HCT116 (cell line): ENCODE measurements at regions of chr14 and their contacts with region 1.

Region 1: GRCh38 chr14:100440187-100440631 is 117.1 kb downstream of the SLC25A47 start:
- DNase-seq: no peak
- ATAC-seq: peak; percentile 75
- H3K4me3 ChIP-seq: peak overlapping the region in 1 of 2 experiments; percentile 42; a peak in 2 of 4 replicates
- H3K27ac ChIP-seq: peak overlapping the region; percentile 77
- H3K4me1 ChIP-seq: peaks cover 43 to 78% of the 10 kb centered on the region in 2 experiments
- H3K27me3 ChIP-seq: no peaks in the 10 kb centered on the region
- CTCF ChIP-seq: peak; percentile 87 to 94 (median 93)
- POLR2A ChIP-seq: no peak
- RAD21 ChIP-seq: peak; percentile 98

Region 2: DNA sequence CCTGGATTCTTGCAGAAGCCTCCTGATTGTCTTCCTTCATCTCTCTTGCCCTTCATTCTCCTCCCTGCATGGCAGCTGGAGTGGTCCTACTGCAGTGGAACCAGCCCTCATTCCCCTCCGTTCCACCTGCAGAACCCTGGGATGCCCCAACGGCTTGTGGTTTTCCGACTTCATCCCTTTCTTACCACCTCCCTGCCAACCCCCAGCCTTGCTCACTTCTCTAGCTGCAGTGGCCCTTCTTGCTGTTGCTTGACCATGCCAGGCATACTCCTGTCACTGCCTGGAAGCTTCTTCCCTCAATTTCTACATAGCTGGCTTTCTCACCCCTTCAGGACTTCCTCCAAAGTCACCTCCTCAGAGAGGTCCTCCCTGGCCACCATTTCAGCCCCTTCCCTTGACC is 23.7 kb after region 1 on chr14:
- CTCF ChIA-PET with region 1: no interaction called
- POLR2A ChIA-PET with region 1: no interaction called
- RAD21 ChIA-PET with region 1: no interaction called
- intact Hi-C with region 1: no loop called
- DNase-seq: no peak
- ATAC-seq: no peak
- H3K4me3 ChIP-seq: no peak overlapping the region
- H3K27ac ChIP-seq: no peak overlapping the region
- H3K4me1 ChIP-seq: no peaks in the 10 kb centered on the region
- H3K27me3 ChIP-seq: peaks cover 27% of the 10 kb centered on the region; the same call in 1 of the 2 replicates
- CTCF ChIP-seq: no peak
- POLR2A ChIP-seq: no peak
- RAD21 ChIP-seq: no peak

Region 3: GRCh38 chr14:100476012-100476822 is 36.0 kb after region 1 on chr14:
- CTCF ChIA-PET with region 1: interaction called, 7 read pairs
- POLR2A ChIA-PET with region 1: no interaction called
- RAD21 ChIA-PET with region 1: interaction called, 8 to 9 read pairs
- intact Hi-C with region 1: loop called (anchors 1 kb)
- DNase-seq: peak; percentile 94
- ATAC-seq: peak; percentile 88
- H3K4me3 ChIP-seq: peak overlapping the region in 1 of 2 experiments; percentile 32; a peak in 3 of 4 replicates
- H3K27ac ChIP-seq: peak overlapping the region; percentile 96
- H3K4me1 ChIP-seq: peaks cover 49 to 59% of the 10 kb centered on the region in 2 experiments
- H3K27me3 ChIP-seq: peaks cover 25% of the 10 kb centered on the region; the same call in 1 of the 2 replicates
- CTCF ChIP-seq: no peak
- POLR2A ChIP-seq: no peak
- RAD21 ChIP-seq: peak; percentile 24; the same call in 1 of the 2 replicates

Region 4: GRCh38 chr14:100645192-100645990 is 205.2 kb after region 1 on chr14:
- CTCF ChIA-PET with region 1: interaction called, 69 read pairs
- POLR2A ChIA-PET with region 1: interaction called, 4 read pairs
- RAD21 ChIA-PET with region 1: interaction called, 15 to 20 read pairs
- intact Hi-C with region 1: loop called (anchors 1 kb)
- DNase-seq: peak; percentile 76
- ATAC-seq: peak; percentile 92
- H3K4me3 ChIP-seq: peak overlapping the region in 1 of 2 experiments; percentile 23; a peak in 1 of 4 replicates
- H3K27ac ChIP-seq: peak overlapping the region; percentile 28; the same call in 1 of the 2 replicates
- H3K4me1 ChIP-seq: peaks cover 8 to 26% of the 10 kb centered on the region in 2 experiments
- H3K27me3 ChIP-seq: no peaks in the 10 kb centered on the region
- CTCF ChIP-seq: peak; percentile 76 to 96 (median 79)
- POLR2A ChIP-seq: no peak
- RAD21 ChIP-seq: peak; percentile 98

Region 5: DNA sequence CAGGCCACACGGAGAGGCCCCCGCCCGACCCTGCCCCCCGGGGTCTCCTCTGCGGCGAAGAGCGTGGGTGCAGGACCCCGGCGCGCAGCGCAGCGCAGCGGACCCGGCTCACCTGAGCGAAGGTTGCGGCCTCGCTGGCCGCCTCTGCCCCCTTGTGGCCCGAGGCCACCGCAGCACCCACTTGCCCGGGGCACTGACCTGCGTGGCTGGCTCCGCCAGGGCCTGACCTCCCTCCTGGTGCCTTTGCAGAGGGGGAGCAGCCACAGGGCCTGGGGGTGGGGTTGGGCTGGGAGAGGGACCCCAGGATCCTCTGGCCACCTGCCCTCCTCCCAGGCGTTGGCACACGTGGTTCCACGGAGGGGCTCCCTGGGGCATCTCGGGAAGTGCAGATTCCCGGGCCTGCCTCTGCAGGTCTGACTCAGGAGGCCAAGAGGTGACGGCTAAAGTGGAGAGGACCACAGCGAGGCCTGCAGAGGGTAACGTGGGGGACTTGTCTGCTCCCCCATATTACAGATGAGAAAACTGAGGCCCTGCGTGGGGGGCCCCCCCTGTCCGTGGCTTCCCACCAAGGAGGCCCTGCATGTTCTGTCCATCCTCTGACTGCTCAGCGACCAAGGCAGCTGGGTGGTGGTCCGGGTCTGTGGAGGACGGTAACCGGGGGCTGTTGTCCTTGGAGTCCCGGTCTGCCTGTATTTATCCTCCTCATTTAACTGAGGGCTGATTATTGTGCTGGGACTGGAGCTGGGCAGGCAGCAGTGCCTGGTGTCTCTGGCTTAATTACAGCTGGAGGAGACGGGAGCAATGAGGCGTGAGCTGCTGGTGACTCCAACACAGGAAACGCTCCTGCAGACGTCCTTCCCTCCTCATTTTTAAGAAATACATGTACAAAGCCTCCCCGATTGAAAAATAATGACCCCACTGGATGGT is 214.9 kb after region 1 on chr14:
- CTCF ChIA-PET with region 1: interaction called, 42 read pairs
- POLR2A ChIA-PET with region 1: interaction called, 4 read pairs
- RAD21 ChIA-PET with region 1: interaction called, 4 to 11 read pairs
- intact Hi-C with region 1: loop called (anchors 2 kb)
- DNase-seq: no peak
- ATAC-seq: peak; percentile 89
- H3K4me3 ChIP-seq: peak overlapping the region; percentile 28 to 44; a peak in 2 of 4 replicates
- H3K27ac ChIP-seq: no peak overlapping the region
- H3K4me1 ChIP-seq: peaks cover 4 to 39% of the 10 kb centered on the region in 2 experiments; a peak in 3 of 4 replicates
- H3K27me3 ChIP-seq: no peaks in the 10 kb centered on the region
- CTCF ChIP-seq: peak in 2 of 3 experiments; percentile 69 to 93; a peak in 4 of 6 replicates
- POLR2A ChIP-seq: no peak
- RAD21 ChIP-seq: no peak

Region 6: GRCh38 chr14:100662879-100663760 is 222.9 kb after region 1 on chr14:
- CTCF ChIA-PET with region 1: interaction called, 11 read pairs
- POLR2A ChIA-PET with region 1: interaction called, 5 read pairs
- RAD21 ChIA-PET with region 1: no interaction called
- intact Hi-C with region 1: no loop called
- DNase-seq: peak; percentile 87
- ATAC-seq: peak; percentile 78
- H3K4me3 ChIP-seq: peak overlapping the region; percentile 28 to 51
- H3K27ac ChIP-seq: peak overlapping the region; percentile 46
- H3K4me1 ChIP-seq: peaks cover 4 to 65% of the 10 kb centered on the region in 2 experiments; a peak in 3 of 4 replicates
- H3K27me3 ChIP-seq: no peaks in the 10 kb centered on the region
- CTCF ChIP-seq: peak in 2 of 3 experiments; percentile 90 to 98; a peak in 4 of 6 replicates
- POLR2A ChIP-seq: no peak
- RAD21 ChIP-seq: no peak